SK-N-SH (cell line): ENCODE measurements at regions of chrX and their contacts with region 1.

Region 1: GRCh38 chrX:73855546-73855945 is 292.5 kb downstream of the CHIC1 start:
- DNase-seq: peak; percentile 57
- H3K4me3 ChIP-seq: no peak overlapping the region
- H3K27ac ChIP-seq: no peak overlapping the region
- H3K4me1 ChIP-seq: no peaks in the 10 kb centered on the region
- H3K27me3 ChIP-seq: no peaks in the 10 kb centered on the region
- CTCF ChIP-seq: peak; percentile 96
- EP300 ChIP-seq: no peak
- RAD21 ChIP-seq: peak; percentile 96

Region 2: DNA sequence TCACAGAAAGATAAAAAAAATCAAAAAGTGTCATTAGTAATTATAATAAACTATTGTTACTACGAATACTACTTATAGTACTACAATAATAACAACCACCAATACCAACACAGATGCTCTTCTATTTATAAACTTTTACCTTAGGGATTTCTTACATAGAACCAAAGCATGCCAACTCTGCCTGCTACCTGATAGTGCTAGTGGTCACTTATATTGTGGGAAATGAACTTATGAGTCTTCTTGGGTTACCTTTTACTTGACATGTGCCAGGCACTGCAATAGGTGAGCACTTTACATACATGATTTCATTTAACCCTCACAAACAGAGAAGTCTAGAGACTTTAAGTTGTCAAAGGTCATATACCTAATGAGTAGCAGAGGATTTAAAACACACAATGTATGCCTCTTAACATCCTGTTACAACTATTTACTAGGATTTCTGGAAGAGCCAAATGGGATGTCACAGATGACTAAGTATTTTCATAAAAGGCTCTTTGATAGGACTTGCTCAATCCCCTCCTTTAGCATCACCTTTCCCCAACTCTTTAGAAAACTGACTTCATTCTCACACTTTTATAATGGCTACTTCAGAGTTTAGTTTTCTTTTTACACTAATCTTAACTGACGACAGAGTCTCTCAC is 27.3 kb before region 1 on chrX:
- CTCF ChIA-PET with region 1: no interaction called
- POLR2A ChIA-PET with region 1: no interaction called
- DNase-seq: no peak
- H3K4me3 ChIP-seq: no peak overlapping the region
- H3K27ac ChIP-seq: no peak overlapping the region
- H3K4me1 ChIP-seq: no peaks in the 10 kb centered on the region; a peak in 1 of 4 replicates
- H3K27me3 ChIP-seq: no peaks in the 10 kb centered on the region
- CTCF ChIP-seq: no peak
- EP300 ChIP-seq: no peak
- RAD21 ChIP-seq: no peak

Region 3: GRCh38 chrX:73877687-73878086 is 22.1 kb after region 1 on chrX:
- CTCF ChIA-PET with region 1: no interaction called
- POLR2A ChIA-PET with region 1: no interaction called
- DNase-seq: no peak
- H3K4me3 ChIP-seq: no peak overlapping the region
- H3K27ac ChIP-seq: no peak overlapping the region
- H3K4me1 ChIP-seq: no peaks in the 10 kb centered on the region
- H3K27me3 ChIP-seq: no peaks in the 10 kb centered on the region
- CTCF ChIP-seq: no peak
- EP300 ChIP-seq: no peak
- RAD21 ChIP-seq: no peak

Region 4: DNA sequence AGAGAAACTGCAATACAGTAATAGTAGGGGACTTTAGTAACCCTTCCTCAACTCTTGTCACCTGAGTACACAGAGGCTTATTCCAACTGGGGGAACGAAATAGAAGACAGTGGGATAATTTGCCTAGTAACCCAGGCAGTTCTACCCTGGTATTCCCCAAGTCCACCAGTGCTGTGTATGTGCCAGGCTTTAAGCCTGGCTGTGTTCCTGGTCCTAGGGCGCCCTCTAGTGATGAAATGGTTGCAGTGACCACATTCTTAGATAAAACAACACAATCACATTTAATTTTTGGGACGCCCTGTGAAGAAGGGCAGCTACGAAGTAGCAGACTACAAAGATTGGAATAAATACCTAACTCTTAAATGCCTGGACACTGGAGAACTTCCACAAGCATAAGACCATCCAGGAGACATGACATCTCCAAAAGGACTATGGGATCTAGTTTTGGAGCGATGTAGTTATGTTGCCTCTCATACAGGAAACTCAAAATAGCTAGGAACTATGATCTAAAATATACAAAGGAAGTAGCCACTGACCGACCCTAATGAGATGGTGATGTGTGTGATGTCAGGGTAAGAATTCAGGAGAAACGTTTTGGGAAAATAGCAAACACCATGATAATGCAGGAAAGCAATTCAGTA is 160.0 kb after region 1 on chrX:
- CTCF ChIA-PET with region 1: interaction called, 18 read pairs
- POLR2A ChIA-PET with region 1: no interaction called
- DNase-seq: peak; percentile 69
- H3K4me3 ChIP-seq: no peak overlapping the region; a peak in 1 of 4 replicates
- H3K27ac ChIP-seq: no peak overlapping the region
- H3K4me1 ChIP-seq: no peaks in the 10 kb centered on the region
- H3K27me3 ChIP-seq: no peaks in the 10 kb centered on the region
- CTCF ChIP-seq: peak; percentile 93
- EP300 ChIP-seq: no peak
- RAD21 ChIP-seq: peak; percentile 97

Region 5: GRCh38 chrX:74318672-74319071 is 463.1 kb after region 1 on chrX:
- CTCF ChIA-PET with region 1: no interaction called
- POLR2A ChIA-PET with region 1: no interaction called
- DNase-seq: no peak
- H3K4me3 ChIP-seq: no peak overlapping the region
- H3K27ac ChIP-seq: no peak overlapping the region
- H3K4me1 ChIP-seq: no peaks in the 10 kb centered on the region
- H3K27me3 ChIP-seq: peaks cover 27% of the 10 kb centered on the region; the same call in 1 of the 2 replicates
- CTCF ChIP-seq: no peak
- EP300 ChIP-seq: no peak
- RAD21 ChIP-seq: no peak